MCF 10A (cell line): ENCODE measurements at regions of chr6 and their contacts with region 1.

Region 1: GRCh38 chr6:70369332-70369950 is 43.9 kb upstream of the FAM135A start:
- DNase-seq: peak; percentile 73
- H3K4me3 Mint-ChIP-seq: no peak overlapping the region
- H3K27ac Mint-ChIP-seq: no peak overlapping the region
- H3K4me1 Mint-ChIP-seq: peaks cover 13% of the 10 kb centered on the region
- H3K27me3 Mint-ChIP-seq: peaks cover 69% of the 10 kb centered on the region
- CTCF ChIP-seq: peak; percentile 89

Region 2: DNA sequence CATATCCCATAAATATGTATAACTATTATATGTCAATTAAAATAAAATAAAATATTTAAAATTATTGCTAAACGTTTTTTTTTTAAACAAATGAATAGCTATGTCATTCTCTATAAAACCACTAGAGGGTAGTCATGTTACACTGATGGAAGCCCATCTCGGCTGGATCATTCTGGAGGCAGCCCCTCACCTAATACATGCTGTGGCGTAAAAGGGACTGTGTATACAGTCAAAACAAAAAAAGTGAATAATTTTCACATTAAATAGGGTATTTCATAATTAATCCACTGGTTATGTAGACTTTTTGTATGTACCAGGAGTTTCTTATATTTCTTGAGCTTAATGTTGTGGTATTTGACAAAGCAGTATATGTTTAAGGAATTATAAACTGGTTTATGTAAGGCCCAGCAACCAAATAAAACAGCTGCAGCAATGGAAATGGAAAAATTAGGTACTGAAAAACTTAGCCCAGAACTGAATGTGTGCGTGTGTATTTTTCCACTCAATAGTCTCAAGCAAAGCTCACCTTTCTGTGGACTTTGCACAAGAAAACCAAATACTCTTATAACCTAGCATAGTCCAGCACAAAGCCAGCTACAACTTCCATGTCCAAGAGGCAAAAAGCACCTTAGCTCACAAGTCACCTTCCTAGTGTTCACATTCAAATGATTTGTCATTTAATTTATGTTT is 148.3 kb before region 1 on chr6:
- CTCF ChIA-PET with region 1: interaction called, 31 read pairs
- POLR2A ChIA-PET with region 1: no interaction called
- intact Hi-C with region 1: loop called (anchors 1 kb)
- DNase-seq: peak; percentile 33
- H3K4me3 Mint-ChIP-seq: no peak overlapping the region
- H3K27ac Mint-ChIP-seq: no peak overlapping the region
- H3K4me1 Mint-ChIP-seq: no peaks in the 10 kb centered on the region
- H3K27me3 Mint-ChIP-seq: peaks cover 100% of the 10 kb centered on the region
- CTCF ChIP-seq: peak; percentile 71

Region 3: DNA sequence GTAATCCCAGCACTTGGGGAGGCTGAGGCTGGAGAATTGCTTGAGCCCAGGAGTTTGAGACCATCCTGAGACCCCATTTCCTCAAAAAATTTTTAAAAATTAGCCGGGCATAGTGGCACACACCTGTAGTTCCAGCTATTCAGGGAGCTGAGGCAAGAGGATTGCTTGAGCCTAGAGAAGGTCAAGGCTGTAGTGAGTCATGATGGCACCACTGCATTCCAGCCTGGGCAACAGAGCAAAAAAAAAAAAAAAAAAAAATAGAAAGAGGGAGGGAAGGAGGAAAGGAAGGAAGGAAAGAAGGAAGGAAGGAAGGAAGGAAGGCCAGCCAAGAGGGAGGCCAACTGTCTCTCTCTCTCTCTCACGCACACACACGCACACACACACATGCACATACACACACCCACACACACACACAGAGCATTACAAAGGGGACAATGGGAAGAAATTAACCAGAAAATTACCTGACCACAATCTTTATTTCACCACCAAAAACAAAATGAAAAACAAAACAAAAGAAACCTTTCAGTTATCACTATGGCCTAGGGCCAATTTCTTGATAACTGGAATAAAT is 16.0 kb before region 1 on chr6:
- CTCF ChIA-PET with region 1: interaction called, 14 read pairs
- POLR2A ChIA-PET with region 1: interaction called, 3 read pairs
- intact Hi-C with region 1: no loop called
- DNase-seq: no peak
- H3K4me3 Mint-ChIP-seq: no peak overlapping the region
- H3K27ac Mint-ChIP-seq: no peak overlapping the region
- H3K4me1 Mint-ChIP-seq: peaks cover 5% of the 10 kb centered on the region
- H3K27me3 Mint-ChIP-seq: peaks cover 70% of the 10 kb centered on the region
- CTCF ChIP-seq: no peak

Region 4: GRCh38 chr6:70398783-70399728 is 29.6 kb after region 1 on chr6:
- CTCF ChIA-PET with region 1: interaction called, 22 read pairs
- POLR2A ChIA-PET with region 1: interaction called, 24 read pairs
- intact Hi-C with region 1: loop called (anchors 2 kb)
- DNase-seq: peak; percentile 77
- H3K4me3 Mint-ChIP-seq: peak overlapping the region; percentile 52
- H3K27ac Mint-ChIP-seq: peak overlapping the region; percentile 81
- H3K4me1 Mint-ChIP-seq: peaks cover 24% of the 10 kb centered on the region
- H3K27me3 Mint-ChIP-seq: no peaks in the 10 kb centered on the region
- CTCF ChIP-seq: no peak

Region 5: DNA sequence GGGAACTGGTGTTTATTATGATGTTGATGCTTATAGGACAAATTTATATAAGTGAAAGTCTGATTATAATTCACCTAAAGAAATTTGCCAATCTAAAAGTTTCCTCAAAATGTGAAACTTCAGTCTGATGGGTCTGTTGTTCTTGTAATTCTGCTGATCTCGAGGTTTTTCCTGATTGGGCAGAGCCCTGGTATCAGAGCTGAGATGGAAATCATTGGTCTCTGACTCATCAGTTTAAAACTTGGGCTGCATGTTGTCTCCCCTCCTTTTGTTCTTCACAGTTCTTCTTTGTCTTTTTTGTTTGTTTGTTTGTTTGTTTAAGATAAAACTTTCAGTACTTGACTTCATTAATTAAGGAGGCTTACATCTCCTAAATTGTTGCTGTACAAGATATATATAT is 304.2 kb after region 1 on chr6:
- CTCF ChIA-PET with region 1: interaction called, 12 read pairs
- POLR2A ChIA-PET with region 1: no interaction called
- intact Hi-C with region 1: no loop called
- DNase-seq: no peak
- H3K4me3 Mint-ChIP-seq: no peak overlapping the region
- H3K27ac Mint-ChIP-seq: no peak overlapping the region
- H3K4me1 Mint-ChIP-seq: peaks cover 37% of the 10 kb centered on the region
- H3K27me3 Mint-ChIP-seq: no peaks in the 10 kb centered on the region
- CTCF ChIP-seq: no peak

Region 6: DNA sequence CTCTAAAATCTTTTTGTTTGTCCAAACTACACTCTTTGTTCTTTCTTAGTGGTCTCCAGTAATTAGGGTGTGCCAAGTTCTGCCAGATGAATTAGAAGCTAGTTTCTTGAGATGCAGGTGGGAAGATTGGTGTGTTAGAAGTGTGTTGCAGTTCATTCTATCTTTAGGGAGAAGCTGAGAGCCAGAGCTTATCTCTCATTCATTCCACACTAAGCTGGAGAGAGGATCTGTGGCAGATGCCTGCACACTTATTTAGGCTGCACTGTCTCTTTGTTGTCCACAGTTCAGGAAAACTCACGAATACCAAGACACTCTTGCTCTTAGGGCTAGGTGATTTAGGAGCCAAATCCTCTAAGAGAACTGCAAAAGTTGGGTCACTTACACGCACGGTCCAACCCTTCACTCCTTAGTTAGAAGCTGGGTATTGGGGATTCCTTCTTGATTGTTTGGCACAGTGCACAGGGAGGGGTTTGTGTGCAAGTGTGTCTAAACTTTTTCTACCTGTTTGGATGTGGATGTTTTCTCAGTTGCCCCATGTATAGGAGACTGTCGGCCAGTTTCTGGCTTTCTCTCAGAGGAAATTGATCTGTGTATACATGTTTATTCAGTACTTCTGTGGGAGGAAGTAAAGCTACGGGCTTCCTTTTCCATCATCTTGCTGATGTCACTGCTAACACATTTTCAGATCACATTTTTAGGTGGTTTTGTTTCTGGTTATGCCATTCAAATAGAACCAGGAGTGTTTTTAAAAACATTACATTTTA is 347.8 kb after region 1 on chr6:
- CTCF ChIA-PET with region 1: no interaction called
- POLR2A ChIA-PET with region 1: no interaction called
- intact Hi-C with region 1: no loop called
- DNase-seq: no peak
- H3K4me3 Mint-ChIP-seq: no peak overlapping the region
- H3K27ac Mint-ChIP-seq: no peak overlapping the region
- H3K4me1 Mint-ChIP-seq: no peaks in the 10 kb centered on the region
- H3K27me3 Mint-ChIP-seq: no peaks in the 10 kb centered on the region
- CTCF ChIP-seq: no peak

Region 7: DNA sequence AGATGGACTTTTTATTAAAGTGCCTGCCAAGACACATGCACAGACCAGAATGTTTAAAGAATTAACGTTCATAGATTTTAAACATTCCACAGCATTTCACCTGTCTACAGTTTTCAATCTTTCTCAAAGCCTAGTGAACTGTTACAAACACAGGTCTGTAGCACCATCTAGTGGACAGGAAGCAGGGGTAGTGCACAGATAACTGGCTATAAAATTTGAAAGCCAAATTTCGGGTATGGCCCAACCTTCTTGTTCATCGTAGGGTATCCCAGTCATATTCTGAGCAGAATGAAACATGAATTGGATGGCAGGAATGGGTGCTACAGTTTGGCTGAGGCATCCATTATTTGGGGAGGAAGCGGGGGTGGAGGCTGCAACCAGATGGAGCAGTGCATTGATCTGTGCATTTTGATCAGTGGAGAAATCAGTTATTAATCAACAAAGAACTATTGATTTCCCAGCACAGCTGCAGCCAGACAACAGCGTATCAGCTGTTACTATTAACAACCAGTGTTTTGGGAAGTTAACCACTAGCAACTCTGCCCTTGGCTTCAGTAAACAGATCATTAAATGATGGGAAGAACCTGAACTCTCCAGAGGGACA is 643.5 kb after region 1 on chr6:
- CTCF ChIA-PET with region 1: interaction called, 9 read pairs
- POLR2A ChIA-PET with region 1: no interaction called
- intact Hi-C with region 1: loop called (anchors 2 kb)
- DNase-seq: peak; percentile 73
- H3K4me3 Mint-ChIP-seq: no peak overlapping the region
- H3K27ac Mint-ChIP-seq: no peak overlapping the region
- H3K4me1 Mint-ChIP-seq: no peaks in the 10 kb centered on the region
- H3K27me3 Mint-ChIP-seq: peaks cover 56% of the 10 kb centered on the region
- CTCF ChIP-seq: peak; percentile 82